ENCODE measurements at regions of chrX and their contacts with region 1.

Region 1: DNA sequence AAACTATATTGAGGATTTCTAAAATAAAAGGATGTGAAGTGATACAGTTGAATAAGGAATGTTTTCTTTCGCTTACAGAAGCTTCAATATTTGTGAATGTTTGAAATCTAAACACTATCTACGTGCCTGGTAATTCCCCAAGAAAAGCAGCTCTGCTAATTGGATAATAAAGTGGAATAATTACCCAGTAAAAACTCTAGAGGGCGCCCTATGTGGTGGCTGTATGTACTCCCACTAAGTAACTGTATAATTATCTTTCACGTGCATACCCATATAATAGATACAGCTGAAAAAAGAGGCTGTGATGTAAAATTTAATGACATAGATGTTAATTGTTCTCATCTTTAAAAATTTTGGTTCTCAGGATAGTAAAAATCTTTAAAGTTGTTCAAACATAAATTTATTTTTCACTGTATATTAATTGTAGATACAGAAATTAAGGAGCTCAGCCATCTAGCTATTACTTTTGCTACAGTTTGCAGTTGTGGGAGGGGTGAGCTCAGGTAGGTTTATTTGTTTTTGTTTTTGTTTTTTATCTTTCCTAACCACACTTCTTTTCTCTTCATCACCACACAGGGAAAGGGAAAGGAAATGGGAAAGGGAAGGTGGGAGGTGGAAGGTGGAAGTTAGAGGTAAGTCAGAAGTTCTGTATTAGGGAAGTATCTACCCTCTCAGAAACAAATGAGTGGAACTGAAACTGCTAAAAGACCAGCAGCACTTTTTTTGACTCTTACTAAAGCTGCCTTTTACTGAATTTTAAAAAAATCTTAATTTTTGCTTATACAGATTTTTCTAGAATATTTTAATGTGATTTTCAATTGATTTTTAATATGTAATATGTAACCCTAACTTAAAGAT is 151.7 kb upstream of the RPS6KA6 start:
- DNase-seq: peak; percentile 1 to 8 (median 6)
- ATAC-seq: no peak
- H3K4me3 ChIP-seq: no peak overlapping the region
- H3K27ac ChIP-seq: no peak overlapping the region
- H3K4me1 ChIP-seq: no peaks in the 10 kb centered on the region
- H3K27me3 ChIP-seq: no peaks in the 10 kb centered on the region
- CTCF ChIP-seq: peak in 1 of 3 experiments; percentile 25; a peak in 2 of 6 replicates
- EP300 ChIP-seq: no peak
- POLR2A ChIP-seq: no peak
- RAD21 ChIP-seq: no peak

Region 2: DNA sequence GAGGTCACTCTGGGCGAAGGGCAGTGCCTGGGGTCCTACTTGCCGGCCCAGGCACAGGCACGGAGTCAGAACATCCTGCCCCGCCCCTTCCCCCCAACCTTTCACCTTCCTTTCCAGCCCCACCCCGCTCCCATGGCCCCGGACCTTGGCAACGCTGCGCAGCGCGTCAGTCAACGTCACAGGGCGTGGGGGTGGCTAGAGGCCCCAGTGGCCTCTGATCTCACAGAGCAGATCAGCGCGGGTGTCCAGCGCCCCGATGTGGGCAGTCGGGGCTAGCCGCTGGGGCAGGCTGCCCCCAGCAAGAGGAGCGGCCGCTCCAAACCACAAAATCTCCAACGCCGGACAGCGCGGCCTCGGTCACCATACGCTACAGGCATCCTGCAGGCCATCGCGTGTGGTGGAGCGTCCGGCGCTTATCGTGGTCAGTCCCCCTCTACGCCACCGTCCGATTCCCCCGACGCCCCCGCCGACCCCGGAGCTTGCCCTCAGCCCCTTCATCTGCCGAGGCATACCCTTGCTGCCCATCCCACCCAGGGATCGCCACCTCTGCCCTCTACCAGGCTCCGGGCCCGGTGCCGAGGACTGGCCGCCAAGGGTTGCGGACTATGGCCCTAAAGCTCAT is 594.3 kb after region 1 on chrX:
- CTCF ChIA-PET with region 1: no interaction called
- POLR2A ChIA-PET with region 1: no interaction called
- in situ Hi-C with region 1: loop called (anchors 10 kb)
- intact Hi-C with region 1: no loop called
- DNase-seq: peak in 2 of 4 experiments; percentile 2 to 9
- ATAC-seq: peak; percentile 72
- H3K4me3 ChIP-seq: no peak overlapping the region
- H3K27ac ChIP-seq: no peak overlapping the region
- H3K4me1 ChIP-seq: no peaks in the 10 kb centered on the region
- H3K27me3 ChIP-seq: no peaks in the 10 kb centered on the region
- CTCF ChIP-seq: no peak; a peak in 1 of 6 replicates
- EP300 ChIP-seq: no peak
- POLR2A ChIP-seq: no peak
- RAD21 ChIP-seq: no peak

Measured in K562 (cell line).